ENCODE measurements at regions of chr13 and their contacts with region 1.

Region 1: DNA sequence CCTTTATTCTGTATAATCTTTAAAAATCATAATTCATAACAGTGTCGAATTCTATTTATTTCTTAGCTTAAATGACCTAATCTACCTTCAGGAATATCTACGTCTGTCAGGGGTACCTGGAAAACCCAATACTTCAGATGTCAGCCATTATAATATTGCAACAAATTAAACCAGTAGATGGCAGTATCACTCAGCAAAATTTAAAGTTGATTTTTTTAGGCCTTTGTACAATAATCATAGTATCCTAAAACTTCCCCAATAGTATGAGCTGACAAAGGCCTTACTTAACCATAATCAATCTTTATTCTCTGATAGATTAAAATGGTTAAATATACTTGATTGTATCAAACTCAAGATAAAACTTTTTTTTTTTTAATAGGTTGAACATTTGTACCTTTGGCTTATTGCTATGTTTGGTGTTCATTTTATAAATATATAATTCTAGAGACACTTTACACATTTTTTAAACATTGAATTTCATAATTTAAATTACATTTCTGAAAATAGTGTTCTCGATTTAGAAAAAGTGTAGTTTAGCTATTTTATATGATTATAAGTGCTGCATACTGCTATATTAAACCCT is 830.2 kb upstream of the SPRY2 start:
- DNase-seq: peak; percentile 37
- H3K4me3 Mint-ChIP-seq: no peak overlapping the region
- H3K27ac Mint-ChIP-seq: no peak overlapping the region
- H3K4me1 Mint-ChIP-seq: no peaks in the 10 kb centered on the region
- H3K27me3 Mint-ChIP-seq: no peaks in the 10 kb centered on the region
- CTCF ChIP-seq: peak; percentile 45

Region 2: GRCh38 chr13:80633251-80633650 is 537.9 kb before region 1 on chr13:
- CTCF ChIA-PET with region 1: no interaction called
- POLR2A ChIA-PET with region 1: no interaction called
- intact Hi-C with region 1: no loop called
- DNase-seq: no peak
- H3K4me3 Mint-ChIP-seq: no peak overlapping the region
- H3K27ac Mint-ChIP-seq: no peak overlapping the region
- H3K4me1 Mint-ChIP-seq: peaks cover 16% of the 10 kb centered on the region
- H3K27me3 Mint-ChIP-seq: no peaks in the 10 kb centered on the region
- CTCF ChIP-seq: no peak

Region 3: GRCh38 chr13:81197966-81198365 is 26.8 kb after region 1 on chr13:
- CTCF ChIA-PET with region 1: no interaction called
- POLR2A ChIA-PET with region 1: no interaction called
- intact Hi-C with region 1: no loop called
- DNase-seq: no peak
- H3K4me3 Mint-ChIP-seq: no peak overlapping the region
- H3K27ac Mint-ChIP-seq: no peak overlapping the region
- H3K4me1 Mint-ChIP-seq: no peaks in the 10 kb centered on the region
- H3K27me3 Mint-ChIP-seq: no peaks in the 10 kb centered on the region
- CTCF ChIP-seq: no peak

Region 4: DNA sequence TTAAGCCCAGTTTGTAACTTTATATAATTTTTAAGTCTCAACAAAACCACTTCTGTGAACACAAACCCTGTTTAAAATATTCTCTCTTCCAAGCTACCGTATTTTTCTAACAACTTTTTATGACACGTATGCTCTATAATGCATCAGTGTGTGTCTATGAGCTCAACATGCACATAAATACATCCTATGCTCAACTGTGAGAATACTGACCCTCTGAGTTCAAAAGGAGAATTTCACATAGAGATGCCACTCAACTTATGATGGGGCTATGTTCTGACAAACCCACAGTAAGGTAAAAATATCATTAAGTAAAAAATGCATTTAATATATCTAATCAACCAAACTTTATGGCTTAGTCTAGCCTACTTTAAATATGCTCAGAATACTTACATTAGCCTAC is 309.5 kb after region 1 on chr13:
- CTCF ChIA-PET with region 1: interaction called, 15 read pairs
- POLR2A ChIA-PET with region 1: no interaction called
- intact Hi-C with region 1: loop called (anchors 2 kb)
- DNase-seq: no peak
- H3K4me3 Mint-ChIP-seq: no peak overlapping the region
- H3K27ac Mint-ChIP-seq: no peak overlapping the region
- H3K4me1 Mint-ChIP-seq: no peaks in the 10 kb centered on the region
- H3K27me3 Mint-ChIP-seq: no peaks in the 10 kb centered on the region
- CTCF ChIP-seq: no peak

Region 5: GRCh38 chr13:81487151-81487550 is 316.0 kb after region 1 on chr13:
- CTCF ChIA-PET with region 1: interaction called, 10 read pairs
- POLR2A ChIA-PET with region 1: no interaction called
- intact Hi-C with region 1: no loop called
- DNase-seq: peak; percentile 70
- H3K4me3 Mint-ChIP-seq: no peak overlapping the region
- H3K27ac Mint-ChIP-seq: no peak overlapping the region
- H3K4me1 Mint-ChIP-seq: peaks cover 16% of the 10 kb centered on the region
- H3K27me3 Mint-ChIP-seq: no peaks in the 10 kb centered on the region
- CTCF ChIP-seq: peak; percentile 21

Region 6: GRCh38 chr13:81540777-81541176 is 369.6 kb after region 1 on chr13:
- CTCF ChIA-PET with region 1: interaction called, 13 read pairs
- POLR2A ChIA-PET with region 1: no interaction called
- intact Hi-C with region 1: no loop called
- DNase-seq: peak; percentile 28
- H3K4me3 Mint-ChIP-seq: no peak overlapping the region
- H3K27ac Mint-ChIP-seq: no peak overlapping the region
- H3K4me1 Mint-ChIP-seq: peaks cover 8% of the 10 kb centered on the region
- H3K27me3 Mint-ChIP-seq: no peaks in the 10 kb centered on the region
- CTCF ChIP-seq: peak; percentile 41

Region 7: DNA sequence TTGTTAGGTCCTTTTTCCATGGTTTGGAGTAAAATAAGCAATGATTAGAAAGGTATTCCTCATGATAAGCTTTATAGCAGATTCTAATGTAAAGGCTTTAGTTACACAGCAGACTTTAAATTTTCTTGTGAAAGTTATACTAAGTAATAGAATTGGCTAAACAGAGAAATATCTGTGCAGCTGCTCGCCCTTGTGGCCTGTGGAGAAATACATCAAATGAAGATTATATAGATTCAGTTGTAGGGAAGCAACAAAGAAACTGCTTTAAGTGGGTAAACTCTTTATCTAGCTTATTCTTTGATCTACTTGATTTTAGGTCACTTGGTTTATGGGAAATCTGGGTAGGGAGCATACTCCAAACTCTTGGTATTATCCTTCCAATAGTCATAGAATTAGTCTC is 439.5 kb after region 1 on chr13:
- CTCF ChIA-PET with region 1: interaction called, 4 read pairs
- POLR2A ChIA-PET with region 1: interaction called, 4 read pairs
- intact Hi-C with region 1: loop called (anchors 5 kb)
- DNase-seq: no peak
- H3K4me3 Mint-ChIP-seq: no peak overlapping the region
- H3K27ac Mint-ChIP-seq: no peak overlapping the region
- H3K4me1 Mint-ChIP-seq: no peaks in the 10 kb centered on the region
- H3K27me3 Mint-ChIP-seq: no peaks in the 10 kb centered on the region
- CTCF ChIP-seq: no peak

Region 8: DNA sequence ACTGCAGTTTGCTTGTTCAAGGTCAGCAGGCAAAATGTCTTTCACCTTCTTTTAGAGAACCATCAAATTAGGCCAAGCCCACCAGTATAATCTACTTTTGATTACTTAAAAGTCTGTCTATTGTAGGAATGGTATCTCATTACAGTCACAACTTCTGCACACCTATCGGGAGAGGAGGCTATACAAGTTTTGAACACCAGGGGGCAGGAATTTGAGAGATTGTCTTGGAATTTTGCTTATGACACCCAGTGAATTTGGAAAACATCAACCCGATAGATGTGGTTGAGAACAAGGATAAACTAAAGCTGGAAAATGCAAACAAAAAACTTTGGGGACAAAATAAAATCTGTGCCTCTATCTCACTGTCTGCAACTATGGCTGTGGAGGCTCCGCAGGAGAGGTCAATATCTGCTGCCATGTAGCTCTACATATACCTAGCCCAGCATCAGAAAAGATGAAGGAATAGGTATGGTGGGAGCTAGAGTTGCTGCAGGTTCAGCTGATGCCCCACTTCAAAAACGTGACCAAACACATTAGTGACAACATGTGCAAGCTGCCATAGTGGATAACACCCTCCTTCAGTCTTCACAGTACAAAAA is 468.9 kb after region 1 on chr13:
- CTCF ChIA-PET with region 1: interaction called, 10 read pairs
- POLR2A ChIA-PET with region 1: no interaction called
- intact Hi-C with region 1: no loop called
- DNase-seq: peak; percentile 58
- H3K4me3 Mint-ChIP-seq: no peak overlapping the region
- H3K27ac Mint-ChIP-seq: no peak overlapping the region
- H3K4me1 Mint-ChIP-seq: no peaks in the 10 kb centered on the region
- H3K27me3 Mint-ChIP-seq: no peaks in the 10 kb centered on the region
- CTCF ChIP-seq: peak; percentile 56

Region 9: GRCh38 chr13:81872581-81872980 is 701.4 kb after region 1 on chr13:
- CTCF ChIA-PET with region 1: interaction called, 43 read pairs
- POLR2A ChIA-PET with region 1: interaction called, 5 read pairs
- intact Hi-C with region 1: loop called (anchors 1 kb)
- DNase-seq: peak; percentile 49
- H3K4me3 Mint-ChIP-seq: no peak overlapping the region
- H3K27ac Mint-ChIP-seq: no peak overlapping the region
- H3K4me1 Mint-ChIP-seq: no peaks in the 10 kb centered on the region
- H3K27me3 Mint-ChIP-seq: no peaks in the 10 kb centered on the region
- CTCF ChIP-seq: peak; percentile 37

Measured in MCF 10A (cell line).